ENCODE measurements at regions of chr12 and their contacts with region 1.

Region 1: GRCh38 chr12:27523642-27524493 is at the start of gene PPFIBP1:
- DNase-seq: peak; percentile 100
- ATAC-seq: peak; percentile 96 to 98 (median 97)
- H3K4me3 ChIP-seq: peak within 1 kb of the TSS; percentile 58 to 85 (median 75)
- H3K27ac ChIP-seq: peak within 1 kb of the TSS; percentile 84 to 97 (median 91)
- H3K4me1 ChIP-seq: peaks cover 2 to 63% (median 54%) of the 10 kb centered on the region in 9 donors
- H3K27me3 ChIP-seq: no peaks in the 10 kb centered on the region
- CTCF ChIP-seq: peak in 6 of 9 donors; percentile 3 to 47 (median 32)
- total RNA-seq, gene PPFIBP1: 233 to 450 (median 325) TPM

Region 2: DNA sequence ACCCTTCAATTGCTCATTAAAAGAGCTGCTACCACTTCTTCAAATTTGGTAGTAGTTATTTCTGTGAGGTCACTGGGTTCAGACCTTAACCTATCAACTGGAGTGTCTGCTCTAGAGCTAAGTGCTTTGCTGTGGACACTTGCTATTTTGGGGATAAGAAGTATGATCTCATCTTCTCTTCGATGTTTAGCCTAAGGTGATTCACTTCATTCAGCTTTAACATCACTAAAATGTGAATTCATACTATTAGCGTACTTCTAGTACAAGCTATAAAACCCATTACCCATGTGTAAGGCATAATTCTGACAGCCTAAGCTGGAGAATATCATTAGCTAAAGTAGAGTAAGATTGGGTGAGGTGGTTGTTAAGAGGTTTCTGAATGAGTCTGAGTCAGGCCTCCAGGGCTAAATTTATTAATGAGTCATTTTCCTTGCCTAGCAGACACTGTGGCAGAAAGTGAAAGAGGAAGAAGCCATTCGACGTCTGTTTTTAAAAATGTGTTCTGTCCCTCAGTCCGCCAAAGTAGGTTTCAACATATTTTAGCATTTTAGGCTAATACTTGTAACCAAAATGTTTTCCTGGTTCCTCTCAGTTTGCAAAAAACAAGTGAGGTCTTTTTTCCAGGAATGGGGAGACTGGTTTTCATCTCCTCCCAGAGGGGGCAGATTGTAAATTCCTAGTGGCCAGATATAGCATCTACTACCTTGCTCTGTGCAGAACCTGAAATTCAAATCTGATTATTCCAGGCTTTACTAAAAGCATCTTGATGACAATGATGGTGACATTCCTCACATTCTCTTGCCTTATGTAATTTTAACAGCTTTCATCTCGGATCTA is 1224.9 kb before region 1 on chr12:
- intact Hi-C with region 1: no loop called
- DNase-seq: peak in 1 of 2 donors; percentile 30
- ATAC-seq: peak; percentile 88 to 98 (median 94)
- H3K4me3 ChIP-seq: peak overlapping the region in 4 of 10 donors; percentile 4 to 30 (median 22)
- H3K27ac ChIP-seq: peak overlapping the region in 8 of 10 donors; percentile 32 to 89 (median 69)
- H3K4me1 ChIP-seq: peaks cover 0 to 31% (median 20%) of the 10 kb centered on the region in 9 donors
- H3K27me3 ChIP-seq: no peaks in the 10 kb centered on the region
- CTCF ChIP-seq: peak in 4 of 9 donors; percentile 23 to 31 (median 30)

Region 3: GRCh38 chr12:27424631-27425230 is 99.1 kb before region 1 on chr12:
- intact Hi-C with region 1: loop called in 1 of 10 experiments (anchors 5 kb)
- DNase-seq: peak in 1 of 2 donors; percentile 41
- ATAC-seq: peak; percentile 70 to 91 (median 84)
- H3K4me3 ChIP-seq: no peak overlapping the region
- H3K27ac ChIP-seq: peak overlapping the region in 5 of 10 donors; percentile 3 to 49 (median 20)
- H3K4me1 ChIP-seq: peaks cover 0 to 20% (median 4%) of the 10 kb centered on the region in 9 donors
- H3K27me3 ChIP-seq: no peaks in the 10 kb centered on the region
- CTCF ChIP-seq: peak; percentile 29 to 75 (median 61)

Region 4: GRCh38 chr12:27549801-27550652 is 26.2 kb after region 1 on chr12:
- intact Hi-C with region 1: loop called in 2 of 10 experiments (anchors 2 kb)
- DNase-seq: peak; percentile 79 to 90
- ATAC-seq: peak; percentile 85 to 93 (median 89)
- H3K4me3 ChIP-seq: peak overlapping the region in 4 of 10 donors; percentile 2 to 30 (median 17)
- H3K27ac ChIP-seq: peak overlapping the region; percentile 65 to 96 (median 83)
- H3K4me1 ChIP-seq: peaks cover 30 to 100% (median 94%) of the 10 kb centered on the region in 9 donors
- H3K27me3 ChIP-seq: no peaks in the 10 kb centered on the region
- CTCF ChIP-seq: peak in 1 of 9 donors; percentile 10

Region 5: GRCh38 chr12:27573972-27574371 is 50.1 kb after region 1 on chr12:
- intact Hi-C with region 1: loop called in 1 of 10 experiments (anchors 5 kb)
- DNase-seq: no peak
- ATAC-seq: peak in 5 of 8 donors; percentile 13 to 72 (median 22)
- H3K4me3 ChIP-seq: no peak overlapping the region
- H3K27ac ChIP-seq: peak overlapping the region in 8 of 10 donors; percentile 6 to 72 (median 37)
- H3K4me1 ChIP-seq: peaks cover 6 to 90% (median 80%) of the 10 kb centered on the region in 9 donors
- H3K27me3 ChIP-seq: no peaks in the 10 kb centered on the region
- CTCF ChIP-seq: no peak

Region 6: DNA sequence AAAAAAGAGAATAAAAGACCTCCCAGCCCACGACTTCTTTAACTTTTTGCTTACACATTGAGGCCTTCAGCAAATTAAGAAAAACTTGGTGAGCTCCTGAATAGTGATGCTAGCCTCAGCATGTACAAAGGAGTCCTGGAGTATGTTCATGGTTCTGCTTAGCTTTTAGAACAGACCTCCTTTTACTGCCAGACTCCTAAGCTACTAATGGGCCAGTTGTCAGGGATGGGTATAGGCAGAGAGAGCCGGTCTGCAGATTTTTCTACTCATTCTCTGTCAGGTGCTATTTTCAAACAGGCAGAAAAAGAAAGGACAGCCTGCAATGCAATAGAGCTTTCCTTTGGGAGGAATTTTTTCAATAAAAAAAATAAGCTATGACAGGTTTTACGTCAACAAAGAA is 90.5 kb after region 1 on chr12:
- intact Hi-C with region 1: no loop called
- DNase-seq: no peak
- ATAC-seq: no peak
- H3K4me3 ChIP-seq: no peak overlapping the region
- H3K27ac ChIP-seq: peak overlapping the region in 1 of 10 donors; percentile 28
- H3K4me1 ChIP-seq: peaks cover 9 to 96% (median 62%) of the 10 kb centered on the region in 9 donors
- H3K27me3 ChIP-seq: no peaks in the 10 kb centered on the region
- CTCF ChIP-seq: no peak

Region 7: DNA sequence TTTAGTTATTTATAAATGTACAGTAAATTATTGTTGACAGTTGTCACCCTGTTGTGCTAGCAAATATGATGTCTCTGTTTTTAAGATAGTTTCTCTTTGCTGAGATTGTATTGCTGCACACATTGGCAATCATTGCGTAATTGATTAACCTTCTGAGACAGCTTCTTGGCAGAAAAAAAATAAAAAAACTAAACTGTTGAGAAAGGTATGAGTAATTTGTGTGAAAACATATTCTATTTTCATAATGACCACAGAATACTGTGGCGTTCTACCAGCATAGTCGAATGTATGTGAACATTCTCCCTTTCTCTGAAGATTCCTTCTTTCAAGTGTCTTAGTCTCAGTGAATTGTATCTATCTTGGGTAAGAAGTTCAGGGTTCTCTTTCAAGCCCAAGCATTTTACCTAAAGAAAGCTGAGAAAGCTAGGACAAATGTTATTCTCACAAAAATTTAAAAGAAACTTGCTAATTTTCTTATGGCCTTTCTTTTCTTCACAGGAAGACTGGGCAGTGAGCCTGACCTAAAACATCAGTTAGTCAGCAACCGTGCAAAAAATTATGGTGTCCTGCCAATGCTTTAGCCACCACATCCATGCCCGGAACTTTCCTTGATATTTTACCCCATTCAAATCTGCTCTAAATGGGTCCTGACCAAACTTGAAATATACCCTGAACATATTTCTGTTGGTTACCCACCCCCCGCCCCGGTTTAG is 103.4 kb after region 1 on chr12:
- intact Hi-C with region 1: loop called in 5 of 10 experiments (anchors 5 to 10 kb)
- DNase-seq: no peak
- ATAC-seq: peak in 2 of 8 donors; percentile 51 to 54
- H3K4me3 ChIP-seq: no peak overlapping the region
- H3K27ac ChIP-seq: peak overlapping the region in 7 of 10 donors; percentile 2 to 62 (median 18)
- H3K4me1 ChIP-seq: peaks cover 6 to 88% (median 57%) of the 10 kb centered on the region in 9 donors
- H3K27me3 ChIP-seq: no peaks in the 10 kb centered on the region
- CTCF ChIP-seq: no peak

Region 8: DNA sequence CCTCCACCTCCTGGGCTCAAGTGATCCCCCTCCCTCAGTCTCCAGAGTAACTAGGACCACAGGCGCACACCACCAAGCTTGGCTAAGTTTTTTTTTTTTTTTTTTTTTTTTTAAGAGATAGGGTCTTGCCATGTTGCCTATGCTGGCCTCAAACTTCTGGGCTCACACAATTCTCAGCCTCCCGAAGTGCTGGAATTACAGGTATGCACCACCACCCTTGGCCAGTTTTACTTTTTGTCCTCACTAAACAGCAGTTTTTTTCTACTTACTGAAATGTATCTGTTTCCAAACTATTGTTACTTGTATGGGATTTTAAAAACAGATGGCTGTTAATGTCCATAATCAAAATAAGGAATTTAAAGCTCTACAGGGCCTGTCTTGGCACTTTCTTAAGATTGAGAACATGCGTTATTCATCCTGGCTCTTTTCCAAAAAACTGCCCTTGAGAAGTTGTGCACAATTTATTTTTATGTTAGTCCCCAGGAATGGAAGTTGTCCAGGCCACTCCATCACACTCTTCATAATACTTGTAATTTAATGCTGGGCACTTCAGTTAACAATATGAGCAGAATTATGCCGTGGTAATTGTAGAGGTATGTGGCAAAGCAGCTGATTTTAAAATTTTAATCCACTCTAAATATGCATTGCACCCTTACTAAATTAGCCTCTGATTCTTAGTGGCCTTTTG is 120.4 kb after region 1 on chr12:
- intact Hi-C with region 1: loop called in 6 of 10 experiments (anchors 5 to 10 kb)
- DNase-seq: no peak
- ATAC-seq: peak in 2 of 8 donors; percentile 7 to 8
- H3K4me3 ChIP-seq: no peak overlapping the region
- H3K27ac ChIP-seq: peak overlapping the region in 2 of 10 donors; percentile 48 to 60
- H3K4me1 ChIP-seq: peaks cover 6 to 45% (median 30%) of the 10 kb centered on the region in 9 donors
- H3K27me3 ChIP-seq: no peaks in the 10 kb centered on the region
- CTCF ChIP-seq: no peak

Measured in heart right ventricle (tissue), 16 donors.